ENCODE measurements at regions of chr18 and their contacts with region 1.

Region 1: GRCh38 chr18:61502472-61502871 is 169.2 kb downstream of the CDH20 start:
- DNase-seq: peak in 5 of 10 donors; percentile 47 to 70 (median 53)
- H3K4me3 ChIP-seq: no peak overlapping the region
- H3K27ac ChIP-seq: peak overlapping the region in 54 of 59 donors; percentile 11 to 89 (median 64)
- H3K27me3 ChIP-seq: no peaks in the 10 kb centered on the region
- CTCF ChIP-seq: peak; percentile 70 to 96 (median 87)

Region 2: GRCh38 chr18:60684843-60685513 is 817.5 kb before region 1 on chr18:
- intact Hi-C with region 1: loop called in 1 of 2 experiments (anchors 10 kb)
- DNase-seq: no peak
- H3K4me3 ChIP-seq: peak overlapping the region in 5 of 59 donors; percentile 17 to 31 (median 24)
- H3K27ac ChIP-seq: no peak overlapping the region
- H3K27me3 ChIP-seq: no peaks in the 10 kb centered on the region
- CTCF ChIP-seq: peak; percentile 34 to 82 (median 68)

Region 3: GRCh38 chr18:60809937-60810336 is 692.5 kb before region 1 on chr18:
- intact Hi-C with region 1: loop called in 1 of 2 experiments (anchors 10 kb)
- DNase-seq: no peak
- H3K4me3 ChIP-seq: no peak overlapping the region
- H3K27ac ChIP-seq: no peak overlapping the region
- H3K27me3 ChIP-seq: no peaks in the 10 kb centered on the region
- CTCF ChIP-seq: no peak

Region 4: DNA sequence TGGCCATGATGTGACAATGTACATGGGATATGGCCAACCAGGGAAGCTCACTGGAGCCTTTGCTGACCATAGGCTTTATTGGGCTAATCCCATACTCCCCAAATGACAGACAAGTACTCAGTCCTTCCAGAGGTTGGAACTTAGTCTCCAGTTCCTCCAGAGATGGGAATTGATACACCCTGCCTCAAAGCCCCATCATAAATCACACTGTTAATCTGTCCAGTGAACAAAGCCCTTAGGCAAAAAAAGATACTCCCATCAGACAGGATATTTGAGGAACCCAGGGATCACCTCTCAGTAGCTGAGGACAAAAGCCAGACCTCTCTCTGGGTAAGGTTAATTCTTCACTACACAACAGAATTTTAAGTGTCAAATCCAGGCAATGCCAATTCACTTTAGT is 416.7 kb before region 1 on chr18:
- intact Hi-C with region 1: loop called in 1 of 2 experiments (anchors 5 kb)
- DNase-seq: no peak
- H3K4me3 ChIP-seq: no peak overlapping the region
- H3K27ac ChIP-seq: peak overlapping the region in 2 of 59 donors; percentile 2 to 21
- H3K27me3 ChIP-seq: no peaks in the 10 kb centered on the region
- CTCF ChIP-seq: no peak

Region 5: DNA sequence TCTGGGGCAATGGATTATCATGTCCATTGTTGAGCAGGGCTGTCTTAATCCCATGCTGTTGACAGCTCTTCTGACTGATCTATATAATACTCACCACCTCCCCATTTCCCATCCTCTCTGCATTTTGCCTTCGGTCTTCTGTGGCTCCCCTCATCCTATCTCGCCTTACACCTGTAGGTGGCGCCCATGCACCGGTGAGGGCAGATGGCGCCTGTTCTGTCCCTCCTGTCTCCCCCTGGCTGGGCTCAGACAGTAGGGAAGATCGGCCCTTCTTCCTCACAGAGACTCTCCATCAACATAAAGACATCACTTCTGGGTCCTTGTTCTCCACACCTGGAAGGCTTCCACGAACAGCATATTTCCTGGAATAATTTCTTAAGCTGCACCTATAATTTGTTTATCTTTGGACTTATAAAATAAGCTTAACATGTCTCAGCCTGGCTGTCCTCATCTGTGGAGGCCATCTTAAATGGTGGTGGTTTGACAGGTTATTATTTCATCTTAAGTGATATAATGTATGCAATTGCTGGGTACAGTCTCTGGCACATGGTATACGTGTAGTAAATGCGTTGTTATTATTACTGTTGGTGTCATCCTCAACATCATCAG is 180.1 kb before region 1 on chr18:
- intact Hi-C with region 1: loop called (anchors 1 to 2 kb)
- DNase-seq: peak; percentile 46 to 84 (median 76)
- H3K4me3 ChIP-seq: no peak overlapping the region
- H3K27ac ChIP-seq: peak overlapping the region in 25 of 59 donors; percentile 3 to 71 (median 33)
- H3K27me3 ChIP-seq: no peaks in the 10 kb centered on the region
- CTCF ChIP-seq: peak; percentile 28 to 99 (median 90)